MCF 10A (cell line): ENCODE measurements at regions of chr1 and their contacts with region 1.

Region 1: GRCh38 chr1:202571347-202572339 is 138.6 kb downstream of the SYT2 start:
- DNase-seq: peak; percentile 74
- H3K4me3 Mint-ChIP-seq: no peak overlapping the region
- H3K27ac Mint-ChIP-seq: no peak overlapping the region
- H3K4me1 Mint-ChIP-seq: peaks cover 13% of the 10 kb centered on the region
- H3K27me3 Mint-ChIP-seq: no peaks in the 10 kb centered on the region
- CTCF ChIP-seq: peak; percentile 81

Region 2: DNA sequence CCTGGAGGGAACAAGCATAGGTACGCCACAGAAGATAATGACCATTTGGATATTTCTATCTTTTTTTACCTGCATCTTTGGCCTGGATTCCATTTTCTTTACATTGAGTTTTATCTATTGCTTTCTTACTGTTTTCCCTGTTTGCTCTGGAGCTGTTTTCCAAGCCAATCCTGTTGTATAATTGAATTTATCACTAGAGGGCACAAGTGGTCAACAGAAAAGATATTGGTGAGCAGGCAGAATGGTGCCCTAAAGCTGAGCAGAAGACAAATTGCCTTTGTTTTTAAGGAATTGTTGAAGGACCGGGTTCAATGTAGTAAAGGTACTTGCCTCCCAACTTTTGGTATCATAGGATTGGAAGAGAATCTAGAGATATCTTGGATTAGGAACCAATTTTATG is 70.4 kb before region 1 on chr1:
- CTCF ChIA-PET with region 1: interaction called, 12 read pairs
- POLR2A ChIA-PET with region 1: interaction called, 3 read pairs
- intact Hi-C with region 1: loop called (anchors 1 kb)
- DNase-seq: peak; percentile 64
- H3K4me3 Mint-ChIP-seq: no peak overlapping the region
- H3K27ac Mint-ChIP-seq: no peak overlapping the region
- H3K4me1 Mint-ChIP-seq: peaks cover 10% of the 10 kb centered on the region
- H3K27me3 Mint-ChIP-seq: no peaks in the 10 kb centered on the region
- CTCF ChIP-seq: peak; percentile 89

Region 3: GRCh38 chr1:202589190-202590030 is 17.8 kb after region 1 on chr1:
- CTCF ChIA-PET with region 1: interaction called, 23 read pairs
- POLR2A ChIA-PET with region 1: interaction called, 146 read pairs
- intact Hi-C with region 1: no loop called
- DNase-seq: peak; percentile 99
- H3K4me3 Mint-ChIP-seq: peak overlapping the region; percentile 20
- H3K27ac Mint-ChIP-seq: peak overlapping the region; percentile 91
- H3K4me1 Mint-ChIP-seq: peaks cover 82% of the 10 kb centered on the region
- H3K27me3 Mint-ChIP-seq: no peaks in the 10 kb centered on the region
- CTCF ChIP-seq: peak; percentile 18

Region 4: DNA sequence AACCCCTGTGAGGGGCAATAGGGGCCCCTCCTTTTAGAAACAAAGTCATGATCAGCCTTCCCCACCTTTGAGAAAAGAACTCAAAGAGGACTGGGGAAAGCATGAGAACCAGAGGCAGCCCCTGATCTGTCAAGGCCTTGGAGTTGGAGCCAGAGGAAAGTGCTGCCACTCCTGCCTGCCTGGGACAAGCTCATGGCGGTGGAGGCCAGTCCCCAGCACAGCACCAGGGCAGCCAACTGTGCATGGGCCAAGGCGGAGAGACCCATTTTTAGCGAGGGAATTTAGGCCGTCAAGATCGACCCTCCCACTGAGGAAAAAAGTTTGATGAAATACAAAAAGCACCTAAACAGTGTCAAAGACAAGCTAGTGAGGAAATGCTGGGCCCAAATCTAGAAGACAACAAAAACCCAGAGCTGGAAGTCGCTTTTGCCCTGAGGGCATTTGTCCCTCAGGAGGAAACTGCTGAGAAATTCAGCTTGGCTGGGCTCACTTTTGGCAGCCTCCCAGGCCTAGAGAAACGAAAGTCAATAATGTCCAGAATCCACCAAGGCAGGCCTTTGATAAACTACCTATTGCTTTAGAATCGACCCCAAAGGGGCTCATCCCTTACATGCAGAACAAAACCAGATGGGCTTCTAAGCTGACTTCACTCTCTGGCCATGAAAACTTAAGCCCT is 99.6 kb after region 1 on chr1:
- CTCF ChIA-PET with region 1: no interaction called
- POLR2A ChIA-PET with region 1: no interaction called
- intact Hi-C with region 1: no loop called
- DNase-seq: peak; percentile 70
- H3K4me3 Mint-ChIP-seq: no peak overlapping the region
- H3K27ac Mint-ChIP-seq: no peak overlapping the region
- H3K4me1 Mint-ChIP-seq: no peaks in the 10 kb centered on the region
- H3K27me3 Mint-ChIP-seq: peaks cover 33% of the 10 kb centered on the region
- CTCF ChIP-seq: no peak

Region 5: GRCh38 chr1:203017061-203017460 is 445.4 kb after region 1 on chr1:
- CTCF ChIA-PET with region 1: no interaction called
- POLR2A ChIA-PET with region 1: no interaction called
- intact Hi-C with region 1: no loop called
- DNase-seq: no peak
- H3K4me3 Mint-ChIP-seq: no peak overlapping the region
- H3K27ac Mint-ChIP-seq: no peak overlapping the region
- H3K4me1 Mint-ChIP-seq: no peaks in the 10 kb centered on the region
- H3K27me3 Mint-ChIP-seq: no peaks in the 10 kb centered on the region
- CTCF ChIP-seq: no peak